ENCODE measurements at regions of chr15 and their contacts with region 1.

Region 1: GRCh38 chr15:38252481-38253412 is at the start of gene SPRED1:
- DNase-seq: peak; percentile 53
- ATAC-seq: peak; percentile 37
- H3K4me3 ChIP-seq: peak within 1 kb of the TSS; percentile 90
- H3K27ac ChIP-seq: peak within 1 kb of the TSS; percentile 94
- H3K4me1 ChIP-seq: peaks cover 36% of the 10 kb centered on the region
- H3K27me3 ChIP-seq: no peaks in the 10 kb centered on the region
- CTCF ChIP-seq: no peak
- total RNA-seq, gene SPRED1: 39.7 and 42.3 TPM in 2 replicates

Region 2: DNA sequence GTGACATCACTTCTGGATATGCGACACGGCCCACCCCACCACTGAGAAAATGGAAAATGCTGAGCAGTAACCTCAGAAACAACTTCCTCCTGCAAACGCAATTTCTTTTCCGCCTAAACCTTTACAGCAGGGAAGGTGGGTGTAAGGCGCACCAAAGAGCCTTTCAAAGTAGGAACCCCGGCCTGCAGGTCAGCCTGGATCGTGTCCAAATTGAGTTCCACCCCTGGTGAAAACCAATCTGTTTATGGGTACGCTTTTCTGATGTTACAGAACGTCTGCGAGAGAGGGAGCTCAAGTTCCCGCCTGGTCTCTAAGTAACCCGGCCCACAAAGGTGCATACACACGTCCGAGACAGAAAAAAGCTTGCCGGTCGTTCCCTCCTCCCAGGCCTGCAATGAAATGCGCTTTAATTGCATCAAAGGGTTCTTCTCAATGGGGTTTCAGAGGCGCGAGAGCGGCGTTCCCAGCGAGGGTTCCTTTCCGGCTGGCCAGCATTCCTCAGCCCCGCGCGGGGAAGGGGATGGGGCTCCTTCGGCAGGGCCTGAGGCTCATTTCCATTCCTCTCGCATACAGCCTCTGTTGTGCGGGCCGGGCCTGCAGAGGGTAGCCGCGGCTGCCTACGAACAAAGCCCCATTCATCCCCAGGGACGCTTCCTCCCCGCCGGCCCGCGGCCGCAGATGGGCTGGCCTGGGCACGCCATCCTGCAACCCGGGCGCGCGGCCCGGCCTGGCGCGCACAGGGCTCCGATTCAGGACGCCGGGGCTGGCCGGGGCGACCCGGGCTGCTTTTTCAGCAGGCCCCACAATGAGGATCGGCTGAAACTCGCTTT is 180.2 kb before region 1 on chr15:
- CTCF ChIA-PET with region 1: interaction called, 6 read pairs
- POLR2A ChIA-PET with region 1: interaction called, 4 read pairs
- intact Hi-C with region 1: loop called (anchors 1 kb)
- DNase-seq: peak; percentile 82
- ATAC-seq: peak; percentile 55
- H3K4me3 ChIP-seq: peak overlapping the region; percentile 68
- H3K27ac ChIP-seq: peak overlapping the region; percentile 91
- H3K4me1 ChIP-seq: peaks cover 65% of the 10 kb centered on the region
- H3K27me3 ChIP-seq: no peaks in the 10 kb centered on the region
- CTCF ChIP-seq: peak; percentile 59

Region 3: GRCh38 chr15:38088971-38089370 is 163.8 kb before region 1 on chr15:
- CTCF ChIA-PET with region 1: no interaction called
- POLR2A ChIA-PET with region 1: no interaction called
- intact Hi-C with region 1: no loop called
- DNase-seq: no peak
- ATAC-seq: no peak
- H3K4me3 ChIP-seq: no peak overlapping the region
- H3K27ac ChIP-seq: no peak overlapping the region
- H3K4me1 ChIP-seq: peaks cover 8% of the 10 kb centered on the region; the same call in 1 of the 2 replicates
- H3K27me3 ChIP-seq: no peaks in the 10 kb centered on the region
- CTCF ChIP-seq: no peak

Region 4: GRCh38 chr15:38195191-38195901 is 57.4 kb before region 1 on chr15:
- CTCF ChIA-PET with region 1: interaction called, 6 read pairs
- POLR2A ChIA-PET with region 1: interaction called, 3 read pairs
- intact Hi-C with region 1: loop called (anchors 1 kb)
- DNase-seq: peak; percentile 78
- ATAC-seq: peak; percentile 82
- H3K4me3 ChIP-seq: no peak overlapping the region
- H3K27ac ChIP-seq: peak overlapping the region; percentile 84
- H3K4me1 ChIP-seq: peaks cover 42% of the 10 kb centered on the region
- H3K27me3 ChIP-seq: no peaks in the 10 kb centered on the region
- CTCF ChIP-seq: no peak

Region 5: DNA sequence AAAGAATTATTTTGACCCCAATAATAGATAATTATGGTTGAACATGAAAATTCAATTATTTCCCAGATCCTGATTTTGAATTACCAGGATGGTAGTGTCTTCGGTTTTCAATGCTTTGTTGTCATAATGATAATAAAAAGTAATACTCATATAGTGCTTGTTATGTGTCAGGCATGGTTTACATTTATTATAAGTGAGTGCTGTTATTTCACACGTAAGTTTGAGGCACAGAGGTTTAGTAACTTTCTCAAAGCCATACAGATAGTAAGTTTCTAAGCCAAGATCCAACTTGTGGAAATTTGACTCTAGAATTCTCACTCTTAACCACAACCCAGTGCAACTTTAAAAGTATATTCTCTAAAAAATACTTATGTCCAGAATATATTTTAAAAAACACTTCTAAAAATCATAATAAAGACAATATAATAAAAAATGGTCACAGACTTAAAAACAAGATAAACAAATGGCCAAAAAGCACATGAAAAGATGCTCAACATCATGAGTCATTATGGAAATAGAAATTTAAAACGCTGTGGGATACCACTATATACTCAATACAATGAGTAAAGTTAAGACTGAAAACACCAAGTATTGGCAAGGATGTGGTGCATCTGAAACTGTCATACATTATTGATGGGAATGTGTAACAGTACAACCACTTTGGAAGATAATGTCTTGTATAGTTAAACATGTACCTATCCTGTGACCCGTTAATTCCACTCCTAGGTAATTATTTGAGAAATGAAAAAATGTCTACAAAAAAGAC is 45.1 kb after region 1 on chr15:
- CTCF ChIA-PET with region 1: no interaction called
- POLR2A ChIA-PET with region 1: no interaction called
- intact Hi-C with region 1: loop called (anchors 2 kb)
- DNase-seq: peak; percentile 80
- ATAC-seq: peak; percentile 69
- H3K4me3 ChIP-seq: no peak overlapping the region
- H3K27ac ChIP-seq: peak overlapping the region; percentile 13
- H3K4me1 ChIP-seq: peaks cover 43% of the 10 kb centered on the region
- H3K27me3 ChIP-seq: no peaks in the 10 kb centered on the region
- CTCF ChIP-seq: no peak

Region 6: GRCh38 chr15:38414357-38414756 is 161.6 kb after region 1 on chr15:
- CTCF ChIA-PET with region 1: no interaction called
- POLR2A ChIA-PET with region 1: no interaction called
- intact Hi-C with region 1: loop called (anchors 5 kb)
- DNase-seq: peak; percentile 76
- ATAC-seq: peak; percentile 100
- H3K4me3 ChIP-seq: no peak overlapping the region
- H3K27ac ChIP-seq: no peak overlapping the region
- H3K4me1 ChIP-seq: no peaks in the 10 kb centered on the region
- H3K27me3 ChIP-seq: peaks cover 25% of the 10 kb centered on the region
- CTCF ChIP-seq: peak; percentile 93

Measured in PC-3 (cell line).